Activated CD4-positive, alpha-beta T cell treated with anti-CD3 and anti-CD28 coated beads, Interleukin-2, amount 10 ng/mL, durations not matched to agents 7 days and 5 days (primary cell): ENCODE measurements at regions of chr2 and their contacts with region 1.

Region 1: GRCh38 chr2:44361330-44362206 is at the starts of genes CAMKMT and PREPL:
- DNase-seq: peak; percentile 99
- H3K4me3 Mint-ChIP-seq: peak within 1 kb of the TSS; percentile 95
- H3K27ac Mint-ChIP-seq: peak within 1 kb of the TSS; percentile 100
- H3K4me1 Mint-ChIP-seq: peaks cover 40% of the 10 kb centered on the region
- H3K27me3 Mint-ChIP-seq: no peaks in the 10 kb centered on the region
- total RNA-seq, gene CAMKMT: 12.1 to 13.7 TPM
- total RNA-seq, gene PREPL: 21.3 to 23.7 TPM

Region 2: DNA sequence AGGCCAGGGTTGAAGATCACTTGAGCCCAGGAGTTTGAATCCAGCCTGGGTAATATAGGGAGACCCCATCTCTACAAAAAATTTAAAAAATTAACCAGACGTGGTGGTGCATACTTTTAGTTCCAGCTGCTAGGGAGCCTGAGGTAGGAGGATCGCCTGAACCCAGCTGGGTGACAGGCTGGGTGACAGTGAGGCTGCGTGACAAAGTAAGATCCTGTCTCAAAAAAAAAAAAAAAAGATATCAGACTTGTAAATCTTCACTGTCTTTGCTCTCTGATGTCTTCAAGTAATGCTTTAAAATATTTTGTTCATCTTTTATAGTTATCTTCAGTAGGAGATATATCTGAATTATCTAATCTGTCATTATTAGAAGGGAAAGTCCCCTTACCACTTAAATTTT is 10.7 kb after region 1 on chr2:
- CTCF ChIA-PET with region 1: interaction called, 13 read pairs
- POLR2A ChIA-PET with region 1: interaction called, 3 read pairs
- DNase-seq: no peak
- H3K4me3 Mint-ChIP-seq: no peak overlapping the region
- H3K27ac Mint-ChIP-seq: no peak overlapping the region
- H3K4me1 Mint-ChIP-seq: peaks cover 16% of the 10 kb centered on the region
- H3K27me3 Mint-ChIP-seq: no peaks in the 10 kb centered on the region

Region 3: DNA sequence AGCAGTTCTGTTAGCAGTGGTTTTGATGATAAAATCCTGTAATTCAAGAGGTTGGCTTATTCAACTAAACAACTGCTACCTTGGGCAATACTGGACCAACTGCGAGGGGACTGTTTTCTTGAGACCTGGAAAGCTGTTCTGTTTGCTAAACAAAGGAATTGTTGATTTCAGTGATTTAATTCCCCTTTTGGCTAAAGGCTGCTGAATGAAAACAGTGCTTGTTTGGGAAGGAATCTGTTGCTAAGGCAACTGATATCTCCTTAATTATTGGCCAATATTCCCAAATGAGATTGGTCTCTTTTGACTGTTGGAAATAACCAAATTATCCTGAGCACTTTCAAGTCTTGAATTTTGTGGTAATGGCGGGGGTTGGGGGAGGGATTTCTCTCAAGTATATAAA is 137.0 kb after region 1 on chr2:
- CTCF ChIA-PET with region 1: no interaction called
- POLR2A ChIA-PET with region 1: no interaction called
- DNase-seq: no peak
- H3K4me3 Mint-ChIP-seq: no peak overlapping the region
- H3K27ac Mint-ChIP-seq: no peak overlapping the region
- H3K4me1 Mint-ChIP-seq: no peaks in the 10 kb centered on the region
- H3K27me3 Mint-ChIP-seq: no peaks in the 10 kb centered on the region